CD4-positive, alpha-beta memory T cell (primary cell): ENCODE measurements at regions of chr17 and their contacts with region 1.

Region 1: DNA sequence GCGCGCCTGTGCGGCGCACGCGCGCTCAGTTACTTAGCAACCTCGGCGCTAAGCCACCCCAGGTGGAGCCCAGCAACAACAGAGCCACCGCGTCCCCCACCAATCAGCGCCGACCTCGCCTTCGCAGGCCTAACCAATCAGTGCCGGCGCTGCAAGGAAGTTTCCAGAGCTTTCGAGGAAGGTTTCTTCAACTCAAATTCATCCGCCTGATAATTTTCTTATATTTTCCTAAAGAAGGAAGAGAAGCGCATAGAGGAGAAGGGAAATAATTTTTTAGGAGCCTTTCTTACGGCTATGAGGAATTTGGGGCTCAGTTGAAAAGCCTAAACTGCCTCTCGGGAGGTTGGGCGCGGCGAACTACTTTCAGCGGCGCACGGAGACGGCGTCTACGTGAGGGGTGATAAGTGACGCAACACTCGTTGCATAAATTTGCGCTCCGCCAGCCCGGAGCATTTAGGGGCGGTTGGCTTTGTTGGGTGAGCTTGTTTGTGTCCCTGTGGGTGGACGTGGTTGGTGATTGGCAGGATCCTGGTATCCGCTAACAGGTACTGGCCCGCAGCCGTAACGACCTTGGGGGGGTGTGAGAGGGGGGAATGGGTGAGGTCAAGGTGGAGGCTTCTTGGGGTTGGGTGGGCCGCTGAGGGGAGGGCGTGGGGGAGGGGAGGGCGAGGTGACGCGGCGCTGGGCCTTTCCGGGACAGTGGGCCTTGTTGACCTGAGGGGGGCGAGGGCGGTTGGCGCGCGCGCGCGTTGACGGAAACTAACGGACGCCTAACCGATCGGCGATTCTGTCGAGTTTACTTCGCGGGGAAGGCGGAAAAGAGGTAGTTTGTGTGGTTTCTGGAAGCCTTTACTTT is at the start of gene UBB:
- DNase-seq: peak; percentile 93 to 98 (median 97)
- H3K4me3 ChIP-seq: peak within 1 kb of the TSS; percentile 72 to 94
- H3K4me3 Mint-ChIP-seq: peak within 1 kb of the TSS; percentile 86 to 99 (median 94)
- H3K27ac ChIP-seq: peak within 1 kb of the TSS; percentile 91
- H3K27ac Mint-ChIP-seq: peak within 1 kb of the TSS; percentile 94 to 100 (median 99)
- H3K4me1 ChIP-seq: peaks cover 25% of the 10 kb centered on the region
- H3K4me1 Mint-ChIP-seq: peaks cover 28 to 49% (median 39%) of the 10 kb centered on the region in 4 donors
- H3K27me3 ChIP-seq: no peaks in the 10 kb centered on the region
- H3K27me3 Mint-ChIP-seq: peaks cover 0 to 4% of the 10 kb centered on the region in 2 donors
- total RNA-seq, gene UBB: 523 to 560 TPM

Region 2: DNA sequence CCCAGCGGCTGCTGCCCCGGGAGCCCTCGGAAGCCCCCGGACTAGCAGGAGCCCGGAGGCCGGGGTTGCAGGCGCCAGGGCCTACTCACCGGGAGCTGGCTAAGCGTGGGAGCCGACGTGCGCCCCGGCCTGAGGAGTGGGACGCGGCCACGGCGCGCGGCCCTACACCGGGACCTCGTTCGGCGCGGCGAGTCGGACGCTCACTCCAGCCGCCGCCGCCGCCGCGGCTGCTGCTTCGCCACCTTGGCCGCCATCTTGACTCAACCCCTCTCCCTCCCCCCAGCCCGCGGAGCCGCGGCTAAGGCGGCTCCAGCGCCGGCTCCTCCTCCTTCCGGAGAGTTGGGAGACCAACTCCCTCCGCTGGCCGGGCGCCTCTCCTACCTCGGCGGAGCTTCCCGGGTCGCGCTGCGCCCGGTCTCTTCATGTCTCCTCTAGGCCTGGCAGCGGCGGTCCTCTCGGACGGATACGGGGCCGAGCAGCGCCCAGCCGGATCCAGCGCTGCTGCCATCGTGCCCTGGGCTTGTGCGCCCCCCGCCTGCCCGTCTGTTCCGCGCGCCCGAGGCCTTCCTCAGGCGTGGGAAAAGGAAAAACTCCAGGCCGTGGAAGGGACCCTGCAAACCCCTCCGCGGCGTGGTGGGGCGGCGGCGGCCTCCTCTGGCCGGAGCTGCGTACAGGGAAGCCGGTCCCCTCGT is 165.4 kb before region 1 on chr17 and contains the start of gene NCOR1:
- CTCF ChIA-PET with region 1: no interaction called
- POLR2A ChIA-PET with region 1: interaction called, 16 read pairs
- intact Hi-C with region 1: loop called (anchors 1 kb)
- DNase-seq: peak; percentile 82 to 89 (median 84)
- H3K4me3 ChIP-seq: peak within 1 kb of the TSS; percentile 59 to 80
- H3K4me3 Mint-ChIP-seq: peak within 1 kb of the TSS; percentile 93 to 100 (median 97)
- H3K27ac ChIP-seq: peak within 1 kb of the TSS; percentile 87
- H3K27ac Mint-ChIP-seq: peak within 1 kb of the TSS; percentile 88 to 98 (median 94)
- H3K4me1 ChIP-seq: peaks cover 59% of the 10 kb centered on the region
- H3K4me1 Mint-ChIP-seq: peaks cover 28 to 65% (median 38%) of the 10 kb centered on the region in 4 donors
- H3K27me3 ChIP-seq: no peaks in the 10 kb centered on the region
- H3K27me3 Mint-ChIP-seq: no peaks in the 10 kb centered on the region
- total RNA-seq, gene NCOR1: 156 to 169 TPM

Region 3: DNA sequence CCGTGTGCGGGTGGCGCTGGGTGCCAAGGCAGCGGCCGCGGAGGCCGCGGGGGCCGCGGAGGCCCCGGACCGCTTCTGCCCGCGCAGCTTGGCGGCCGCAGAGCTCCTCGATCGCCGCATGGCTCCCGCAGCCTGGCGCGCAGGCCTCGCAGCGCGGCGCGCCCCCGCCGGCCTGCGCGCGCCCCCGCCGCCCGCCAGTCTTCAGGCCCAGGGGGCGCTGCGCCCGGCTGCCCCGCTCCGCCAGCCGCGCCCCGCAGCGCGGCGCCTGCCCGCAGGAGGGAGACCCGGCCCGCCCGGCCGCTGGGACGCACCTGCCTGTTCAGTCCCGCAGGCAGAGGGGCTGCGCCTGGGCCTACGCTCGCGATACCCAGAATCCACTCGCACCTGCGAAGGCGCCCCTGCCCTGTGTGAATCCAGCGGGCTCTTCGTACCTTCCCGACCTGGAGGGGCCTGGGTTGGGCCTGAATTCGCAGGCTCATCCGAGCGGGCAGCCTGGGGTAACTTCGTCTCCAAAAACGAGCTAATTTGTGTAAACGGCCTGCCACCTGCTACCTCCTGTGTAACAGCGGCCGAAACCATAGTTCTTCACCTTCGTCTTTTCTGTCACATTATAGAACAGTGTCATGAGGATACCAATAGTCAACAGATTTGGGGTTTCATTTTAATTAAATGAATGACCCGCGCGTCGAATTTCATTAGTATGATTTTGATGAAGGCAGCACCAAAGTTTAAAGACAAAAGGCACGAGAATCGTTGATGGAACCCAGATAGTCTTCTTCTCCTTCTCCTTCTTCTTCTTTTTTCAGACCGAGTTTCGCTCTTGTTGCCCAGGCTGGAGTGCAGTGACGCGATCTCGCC is 27.3 kb before region 1 on chr17 and contains the start of gene CENPV:
- CTCF ChIA-PET with region 1: interaction called, 4 read pairs
- POLR2A ChIA-PET with region 1: interaction called, 18 read pairs
- intact Hi-C with region 1: loop called (anchors 1 kb)
- DNase-seq: peak; percentile 64 to 71 (median 66)
- H3K4me3 ChIP-seq: peak within 1 kb of the TSS; percentile 44 to 66
- H3K4me3 Mint-ChIP-seq: peak within 1 kb of the TSS; percentile 91 to 97 (median 94)
- H3K27ac ChIP-seq: peak within 1 kb of the TSS; percentile 47
- H3K27ac Mint-ChIP-seq: peak within 1 kb of the TSS; percentile 45 to 91 (median 79)
- H3K4me1 ChIP-seq: peaks cover 12% of the 10 kb centered on the region
- H3K4me1 Mint-ChIP-seq: peaks cover 9 to 17% (median 15%) of the 10 kb centered on the region in 4 donors
- H3K27me3 ChIP-seq: no peaks in the 10 kb centered on the region
- H3K27me3 Mint-ChIP-seq: no peaks in the 10 kb centered on the region
- total RNA-seq, gene CENPV: 8.4 to 8.6 TPM

Region 4: DNA sequence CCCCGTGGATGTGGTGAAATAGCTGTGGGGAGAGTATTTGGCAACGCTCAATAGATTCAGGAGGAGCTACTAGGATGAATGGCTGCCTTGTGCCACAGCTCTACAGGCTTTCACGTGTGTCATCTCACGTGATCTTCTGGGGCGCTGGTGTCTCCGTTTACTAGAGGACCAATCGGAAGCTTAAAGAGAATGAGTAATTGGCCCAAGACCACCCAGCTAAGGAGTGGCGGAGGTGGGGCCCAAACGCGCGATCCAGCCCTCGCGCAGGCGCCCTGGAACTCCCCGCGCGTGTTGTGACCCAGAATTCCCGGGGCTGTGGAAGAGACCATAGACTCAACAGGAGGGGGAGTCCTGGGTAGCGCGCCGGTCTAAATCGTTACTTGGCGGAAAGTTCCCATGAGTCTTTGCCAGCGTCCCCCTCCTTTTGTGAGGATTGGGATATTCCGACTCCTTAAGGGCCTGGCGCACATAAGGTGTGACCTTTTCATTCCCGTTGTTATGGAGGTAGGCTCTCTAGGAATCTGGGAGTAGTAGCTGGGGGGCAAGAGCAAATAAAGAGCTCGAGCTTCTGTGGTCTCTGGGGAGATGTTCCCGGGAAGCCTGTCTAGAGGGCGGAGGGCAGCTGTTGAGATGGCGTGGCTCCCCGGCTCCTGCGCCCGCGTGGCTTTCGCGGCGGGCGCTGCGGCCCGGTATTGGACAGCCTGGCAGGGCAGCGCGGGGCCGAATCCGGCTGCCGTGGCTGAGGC is 57.9 kb after region 1 on chr17:
- CTCF ChIA-PET with region 1: interaction called, 11 read pairs
- POLR2A ChIA-PET with region 1: interaction called, 82 read pairs
- intact Hi-C with region 1: loop called (anchors 1 kb)
- DNase-seq: peak; percentile 94 to 97 (median 96)
- H3K4me3 ChIP-seq: peak overlapping the region; percentile 78 to 95
- H3K4me3 Mint-ChIP-seq: peak overlapping the region; percentile 98 to 100 (median 99)
- H3K27ac ChIP-seq: peak overlapping the region; percentile 94
- H3K27ac Mint-ChIP-seq: peak overlapping the region; percentile 96 to 100 (median 99)
- H3K4me1 ChIP-seq: peaks cover 45% of the 10 kb centered on the region
- H3K4me1 Mint-ChIP-seq: peaks cover 32 to 57% (median 43%) of the 10 kb centered on the region in 4 donors
- H3K27me3 ChIP-seq: no peaks in the 10 kb centered on the region
- H3K27me3 Mint-ChIP-seq: no peaks in the 10 kb centered on the region

Region 5: DNA sequence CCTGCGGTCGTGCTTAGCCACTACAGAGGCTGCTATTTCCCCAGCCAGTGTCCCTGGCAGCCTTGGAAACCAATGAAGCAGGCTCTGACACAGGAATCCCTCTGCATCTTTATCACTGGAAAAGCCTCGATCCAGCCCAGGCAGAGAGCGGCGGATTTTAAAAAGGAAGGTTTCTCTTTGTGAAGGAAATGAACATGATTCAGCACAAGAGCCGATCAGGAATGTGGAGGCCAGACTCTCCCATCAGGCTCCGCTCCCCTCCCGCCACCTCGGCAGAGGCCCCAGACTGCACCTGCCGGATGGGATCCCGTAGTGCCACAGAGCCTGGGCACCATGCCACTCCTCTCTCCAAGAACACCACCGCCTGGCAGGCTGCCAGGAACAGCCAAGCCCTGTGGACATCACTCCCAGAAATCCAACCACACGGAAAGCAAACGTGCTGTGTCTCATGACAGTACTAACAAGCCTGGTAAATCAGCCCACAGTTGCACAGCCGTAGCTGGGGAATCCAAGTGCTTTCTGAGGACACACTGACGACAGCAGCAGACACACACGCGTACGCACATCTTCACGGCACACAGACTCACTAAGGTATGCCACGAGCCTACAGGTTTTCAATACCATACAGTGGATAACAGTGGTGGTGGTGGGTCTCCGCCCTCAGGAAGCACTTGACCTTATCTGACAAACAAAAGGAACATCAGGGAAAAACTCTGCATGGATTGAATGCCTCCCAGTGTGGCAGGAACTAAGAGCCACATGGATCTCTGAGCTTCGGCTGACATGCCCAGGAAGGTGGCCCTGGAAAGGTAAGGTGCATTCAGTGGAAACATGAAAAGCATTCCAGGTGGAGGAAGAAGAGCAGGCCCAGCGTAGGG is 105.7 kb after region 1 on chr17:
- CTCF ChIA-PET with region 1: no interaction called
- POLR2A ChIA-PET with region 1: no interaction called
- intact Hi-C with region 1: no loop called
- DNase-seq: no peak
- H3K4me3 ChIP-seq: no peak overlapping the region
- H3K4me3 Mint-ChIP-seq: peak overlapping the region in 1 of 8 donors; percentile 8
- H3K27ac ChIP-seq: no peak overlapping the region
- H3K27ac Mint-ChIP-seq: no peak overlapping the region
- H3K4me1 ChIP-seq: peaks cover 11% of the 10 kb centered on the region
- H3K4me1 Mint-ChIP-seq: peaks cover 3 to 18% (median 11%) of the 10 kb centered on the region in 4 donors
- H3K27me3 ChIP-seq: no peaks in the 10 kb centered on the region
- H3K27me3 Mint-ChIP-seq: peaks cover 0 to 1% of the 10 kb centered on the region in 2 donors

Region 6: DNA sequence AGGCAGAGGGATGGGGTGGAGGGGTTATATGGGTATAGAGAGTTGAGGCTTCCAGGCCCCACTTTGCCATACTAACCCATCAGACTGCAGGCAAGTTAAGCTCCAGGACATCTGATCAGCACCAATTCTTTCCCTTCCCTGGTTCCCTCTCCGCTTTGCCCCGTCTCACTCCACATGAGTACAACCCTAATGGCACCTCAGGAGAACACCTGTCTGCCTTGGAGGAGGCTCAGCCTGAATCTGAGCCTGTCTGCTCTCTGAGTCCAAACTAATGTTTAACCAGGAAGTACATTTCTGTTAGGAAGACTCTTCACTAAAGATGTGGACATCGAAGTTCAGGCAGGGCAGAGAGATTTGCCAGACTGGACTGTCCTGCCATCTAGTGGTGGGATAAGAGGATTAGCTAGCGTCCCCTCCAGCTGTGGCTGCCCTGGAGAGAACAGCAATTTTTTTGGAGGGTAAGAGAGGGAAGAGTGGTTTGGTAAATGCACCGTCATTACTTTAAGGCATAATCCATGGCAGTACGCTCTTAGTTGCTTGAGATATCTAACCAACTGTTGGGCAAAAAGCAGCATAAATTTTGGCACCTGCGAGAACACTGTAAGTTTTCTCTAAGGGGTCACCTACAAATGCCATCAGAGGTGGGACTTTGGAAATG is 140.3 kb after region 1 on chr17:
- CTCF ChIA-PET with region 1: interaction called, 19 read pairs
- POLR2A ChIA-PET with region 1: interaction called, 6 read pairs
- intact Hi-C with region 1: loop called (anchors 1 kb)
- DNase-seq: peak; percentile 64 to 71 (median 68)
- H3K4me3 ChIP-seq: no peak overlapping the region
- H3K4me3 Mint-ChIP-seq: no peak overlapping the region
- H3K27ac ChIP-seq: no peak overlapping the region
- H3K27ac Mint-ChIP-seq: peak overlapping the region in 2 of 7 donors; percentile 48 to 63
- H3K4me1 ChIP-seq: peaks cover 3% of the 10 kb centered on the region
- H3K4me1 Mint-ChIP-seq: peaks cover 0 to 5% (median 2%) of the 10 kb centered on the region in 4 donors
- H3K27me3 ChIP-seq: no peaks in the 10 kb centered on the region
- H3K27me3 Mint-ChIP-seq: peaks cover 20 to 21% of the 10 kb centered on the region in 2 donors

Region 7: GRCh38 chr17:16551878-16552636 is 171.2 kb after region 1 on chr17:
- CTCF ChIA-PET with region 1: no interaction called
- POLR2A ChIA-PET with region 1: no interaction called
- intact Hi-C with region 1: no loop called
- DNase-seq: no peak
- H3K4me3 ChIP-seq: no peak overlapping the region
- H3K4me3 Mint-ChIP-seq: no peak overlapping the region
- H3K27ac ChIP-seq: no peak overlapping the region
- H3K27ac Mint-ChIP-seq: no peak overlapping the region
- H3K4me1 ChIP-seq: no peaks in the 10 kb centered on the region
- H3K4me1 Mint-ChIP-seq: no peaks in the 10 kb centered on the region
- H3K27me3 ChIP-seq: no peaks in the 10 kb centered on the region
- H3K27me3 Mint-ChIP-seq: no peaks in the 10 kb centered on the region